Breast epithelium (tissue), 4 donors: ENCODE measurements at regions of chr4 and their contacts with region 1.

Region 1: GRCh38 chr4:26583865-26584652 is at the start of gene TBC1D19:
- DNase-seq: peak; percentile 79 to 86
- H3K4me3 ChIP-seq: peak within 1 kb of the TSS; percentile 66 to 87 (median 78)
- H3K27ac ChIP-seq: peak within 1 kb of the TSS; percentile 80 to 84
- H3K4me1 ChIP-seq: no peaks in the 10 kb centered on the region
- H3K27me3 ChIP-seq: no peaks in the 10 kb centered on the region
- CTCF ChIP-seq: no peak
- POLR2A ChIP-seq: no peak
- total RNA-seq, gene TBC1D19: 14.9 to 27.2 (median 23.9) TPM

Region 2: GRCh38 chr4:25271866-25272265 is 1312.2 kb before region 1 on chr4:
- intact Hi-C with region 1: no loop called
- DNase-seq: no peak
- H3K4me3 ChIP-seq: no peak overlapping the region
- H3K27ac ChIP-seq: no peak overlapping the region
- H3K4me1 ChIP-seq: no peaks in the 10 kb centered on the region
- H3K27me3 ChIP-seq: no peaks in the 10 kb centered on the region
- CTCF ChIP-seq: no peak
- POLR2A ChIP-seq: no peak

Region 3: DNA sequence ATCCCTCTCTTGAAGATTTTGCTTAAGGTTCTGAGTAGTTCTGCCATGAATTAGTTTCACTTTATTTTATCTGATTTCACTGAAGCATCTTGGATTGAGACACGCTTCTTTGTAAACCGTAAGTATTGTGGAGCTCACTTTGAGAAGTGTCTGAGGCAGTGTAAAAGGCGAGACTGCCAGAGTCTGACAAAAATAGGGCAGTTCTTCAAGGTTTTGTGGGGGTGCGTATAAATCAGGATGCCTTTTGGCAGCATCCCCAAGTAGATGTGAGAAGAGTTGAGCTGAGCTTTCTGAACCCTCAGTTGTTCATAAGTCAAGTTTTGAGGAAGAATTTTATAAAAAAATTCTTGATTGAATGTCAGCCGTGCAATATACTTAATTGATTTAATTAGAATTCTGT is 187.0 kb before region 1 on chr4:
- intact Hi-C with region 1: loop called (anchors 10 kb)
- DNase-seq: no peak
- H3K4me3 ChIP-seq: no peak overlapping the region
- H3K27ac ChIP-seq: no peak overlapping the region
- H3K4me1 ChIP-seq: no peaks in the 10 kb centered on the region
- H3K27me3 ChIP-seq: no peaks in the 10 kb centered on the region
- CTCF ChIP-seq: no peak
- POLR2A ChIP-seq: no peak

Region 4: GRCh38 chr4:26619784-26620183 is 35.7 kb after region 1 on chr4:
- intact Hi-C with region 1: no loop called
- DNase-seq: no peak
- H3K4me3 ChIP-seq: no peak overlapping the region
- H3K27ac ChIP-seq: no peak overlapping the region
- H3K4me1 ChIP-seq: no peaks in the 10 kb centered on the region
- H3K27me3 ChIP-seq: no peaks in the 10 kb centered on the region
- CTCF ChIP-seq: no peak
- POLR2A ChIP-seq: no peak

Region 5: GRCh38 chr4:26885912-26886274 is 301.8 kb after region 1 on chr4:
- intact Hi-C with region 1: no loop called
- DNase-seq: no peak
- H3K4me3 ChIP-seq: no peak overlapping the region
- H3K27ac ChIP-seq: no peak overlapping the region
- H3K4me1 ChIP-seq: no peaks in the 10 kb centered on the region
- H3K27me3 ChIP-seq: no peaks in the 10 kb centered on the region
- CTCF ChIP-seq: no peak
- POLR2A ChIP-seq: no peak